ENCODE measurements at regions of chr6 and their contacts with region 1.

Region 1: GRCh38 chr6:125584468-125585029 is 164.9 kb upstream of the HEY2 start:
- DNase-seq: peak; percentile 83

Region 2: DNA sequence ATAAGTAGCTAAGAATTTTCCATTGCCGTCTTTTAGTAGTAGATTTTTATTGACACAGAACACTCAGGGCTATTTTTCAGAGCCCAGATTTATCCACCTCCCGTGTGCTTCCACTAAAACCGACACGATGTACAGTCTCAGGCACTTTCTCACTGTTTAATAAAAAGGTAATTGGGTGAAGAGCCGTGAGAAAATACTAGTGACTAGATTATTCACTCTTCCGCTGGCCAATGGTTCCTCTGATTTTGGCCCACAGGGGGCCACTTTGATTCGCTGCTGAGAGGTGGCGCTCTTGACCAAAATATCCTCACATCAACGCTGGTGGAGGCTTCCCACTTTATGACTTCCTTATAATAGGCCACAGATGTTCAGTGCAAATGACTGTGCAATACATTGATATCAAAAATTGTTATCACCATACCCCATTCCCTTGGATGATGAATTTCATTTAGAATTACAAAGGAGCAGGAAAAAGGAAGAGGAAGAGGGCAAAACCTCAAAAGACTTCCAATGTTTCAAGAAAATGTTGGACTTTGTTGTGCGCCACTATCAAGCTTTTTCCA is 270.4 kb before region 1 on chr6:
- intact Hi-C with region 1: loop called (anchors 5 kb)
- DNase-seq: peak; percentile 79

Region 3: GRCh38 chr6:125749173-125749864 is 164.8 kb after region 1 on chr6 and contains the start of gene HEY2:
- intact Hi-C with region 1: loop called (anchors 5 kb)
- DNase-seq: peak; percentile 97
- total RNA-seq, gene HEY2: 12.3 TPM

Region 4: DNA sequence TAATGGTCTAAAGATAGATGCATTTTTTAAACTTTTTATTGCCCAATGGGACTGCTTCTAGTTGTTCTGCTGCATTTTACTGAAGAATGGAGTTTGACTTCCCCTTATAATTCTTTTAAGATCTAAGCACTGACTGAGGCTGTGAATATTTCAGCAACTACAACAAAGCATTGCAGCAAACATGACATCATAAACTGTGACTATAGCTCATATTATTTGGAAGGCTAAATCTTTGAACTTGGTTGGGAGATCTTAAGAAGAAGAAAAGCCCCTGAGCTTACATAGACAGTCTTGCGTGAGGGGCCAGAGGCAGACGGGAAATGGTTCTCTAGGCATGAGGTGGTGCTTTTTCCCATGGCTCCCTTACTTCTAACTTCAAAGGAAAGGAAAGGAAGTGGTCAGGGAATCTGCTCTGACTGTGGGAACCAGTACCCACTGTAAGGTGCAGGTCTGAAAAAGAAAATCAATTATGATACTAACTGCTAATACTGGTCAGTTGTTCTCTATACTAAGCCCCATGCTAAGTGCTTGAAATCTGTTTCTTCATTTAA is 179.6 kb after region 1 on chr6:
- intact Hi-C with region 1: loop called (anchors 5 kb)
- DNase-seq: no peak